ENCODE measurements at regions of chr3 and their contacts with region 1.

Region 1: DNA sequence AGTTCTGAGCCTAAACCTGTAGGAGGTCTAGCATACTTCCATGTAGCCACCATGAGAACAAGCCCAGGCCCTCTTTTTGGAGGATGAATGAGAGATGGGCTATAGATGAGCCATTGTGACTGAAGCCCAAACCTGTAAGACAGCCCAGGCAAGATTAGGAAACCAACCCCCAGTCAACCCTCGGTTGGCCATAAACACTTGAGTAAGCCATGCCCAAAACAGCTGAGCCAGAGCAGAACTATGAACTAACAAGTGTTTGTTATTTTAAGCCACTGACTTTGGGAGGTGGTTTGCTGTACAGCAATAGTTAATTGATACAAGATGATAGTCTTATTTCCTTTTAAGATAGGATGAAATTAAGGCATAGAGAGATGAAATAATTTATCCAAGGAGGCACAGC is 12.4 kb upstream of the CPNE4 start:
- DNase-seq: no peak
- ATAC-seq: no peak
- H3K4me3 ChIP-seq: no peak overlapping the region
- H3K27ac ChIP-seq: no peak overlapping the region
- H3K4me1 ChIP-seq: no peaks in the 10 kb centered on the region
- H3K27me3 ChIP-seq: no peaks in the 10 kb centered on the region
- CTCF ChIP-seq: no peak
- POLR2A ChIP-seq: no peak

Region 2: GRCh38 chr3:131812421-131812820 is 234.8 kb before region 1 on chr3:
- intact Hi-C with region 1: no loop called
- DNase-seq: no peak
- ATAC-seq: no peak
- H3K4me3 ChIP-seq: no peak overlapping the region
- H3K27ac ChIP-seq: no peak overlapping the region
- H3K4me1 ChIP-seq: no peaks in the 10 kb centered on the region
- H3K27me3 ChIP-seq: no peaks in the 10 kb centered on the region
- CTCF ChIP-seq: no peak
- POLR2A ChIP-seq: no peak

Region 3: GRCh38 chr3:131840156-131840797 is 206.9 kb before region 1 on chr3:
- intact Hi-C with region 1: no loop called
- DNase-seq: no peak
- ATAC-seq: no peak
- H3K4me3 ChIP-seq: no peak overlapping the region
- H3K27ac ChIP-seq: no peak overlapping the region
- H3K4me1 ChIP-seq: no peaks in the 10 kb centered on the region
- H3K27me3 ChIP-seq: no peaks in the 10 kb centered on the region
- CTCF ChIP-seq: no peak
- POLR2A ChIP-seq: no peak

Region 4: GRCh38 chr3:132174500-132174899 is 127.3 kb after region 1 on chr3:
- intact Hi-C with region 1: loop called in 1 of 2 experiments (anchors 10 kb)
- DNase-seq: no peak
- ATAC-seq: no peak
- H3K4me3 ChIP-seq: no peak overlapping the region
- H3K27ac ChIP-seq: no peak overlapping the region
- H3K4me1 ChIP-seq: no peaks in the 10 kb centered on the region
- H3K27me3 ChIP-seq: no peaks in the 10 kb centered on the region
- CTCF ChIP-seq: no peak
- POLR2A ChIP-seq: no peak

Region 5: DNA sequence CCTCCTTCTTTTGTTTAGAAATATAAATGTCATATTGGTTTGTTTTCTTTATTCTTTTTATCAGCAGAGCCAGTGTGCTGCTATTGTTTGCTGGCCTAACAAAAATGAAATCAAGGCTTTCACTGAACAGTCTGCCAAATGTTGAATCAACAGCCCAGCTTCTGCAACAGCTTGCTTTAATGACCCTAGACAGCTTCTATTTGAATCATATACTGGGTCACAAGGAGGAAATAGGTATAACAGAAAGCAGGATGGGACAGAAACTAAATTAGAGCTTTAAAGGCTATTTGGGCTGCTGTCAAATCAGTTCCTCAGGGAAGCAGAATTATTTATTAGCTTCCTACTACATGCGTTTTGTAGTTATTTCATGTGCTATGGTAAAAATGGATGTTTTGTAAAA is 358.0 kb after region 1 on chr3:
- intact Hi-C with region 1: no loop called
- DNase-seq: no peak
- ATAC-seq: peak; percentile 31 to 86 (median 58)
- H3K4me3 ChIP-seq: no peak overlapping the region
- H3K27ac ChIP-seq: no peak overlapping the region
- H3K4me1 ChIP-seq: no peaks in the 10 kb centered on the region
- H3K27me3 ChIP-seq: no peaks in the 10 kb centered on the region
- CTCF ChIP-seq: no peak
- POLR2A ChIP-seq: no peak

Measured in right lobe of liver (tissue), 6 donors.